Heart left ventricle (tissue), 16 donors: ENCODE measurements at regions of chr6 and their contacts with region 1.

Region 1: DNA sequence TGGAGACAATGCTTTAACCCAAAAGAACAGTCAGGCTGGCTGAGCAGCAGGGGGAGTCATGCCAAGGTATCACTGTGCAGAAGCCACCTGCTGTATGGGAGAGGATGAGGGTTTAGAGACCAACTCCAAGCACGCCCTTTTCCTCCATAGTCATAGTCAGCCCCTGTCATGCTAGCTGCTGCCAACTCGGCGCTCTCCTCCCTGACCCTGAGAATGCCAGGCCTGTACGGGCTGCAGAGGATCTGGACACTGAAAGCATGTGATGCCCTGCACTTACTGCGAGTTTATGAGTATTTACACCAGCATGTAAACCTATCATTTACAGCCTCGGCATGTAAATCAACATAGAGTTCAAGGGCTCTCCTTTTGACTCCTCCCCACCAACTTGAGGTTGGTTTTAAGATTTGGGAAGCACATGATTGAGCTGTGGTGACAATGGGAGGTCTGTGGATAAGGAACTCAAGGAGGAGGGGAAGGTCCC is 11.7 kb upstream of the SCUBE3 start:
- DNase-seq: peak in 3 of 5 donors; percentile 20 to 63 (median 31)
- ATAC-seq: peak; percentile 71 to 83 (median 77)
- H3K4me3 ChIP-seq: no peak overlapping the region
- H3K27ac ChIP-seq: peak overlapping the region in 4 of 12 donors; percentile 10 to 46 (median 26)
- H3K4me1 ChIP-seq: peaks cover 0 to 24% (median 2%) of the 10 kb centered on the region in 12 donors
- H3K27me3 ChIP-seq: no peaks in the 10 kb centered on the region
- CTCF ChIP-seq: no peak
- POLR2A ChIP-seq: no peak

Region 2: DNA sequence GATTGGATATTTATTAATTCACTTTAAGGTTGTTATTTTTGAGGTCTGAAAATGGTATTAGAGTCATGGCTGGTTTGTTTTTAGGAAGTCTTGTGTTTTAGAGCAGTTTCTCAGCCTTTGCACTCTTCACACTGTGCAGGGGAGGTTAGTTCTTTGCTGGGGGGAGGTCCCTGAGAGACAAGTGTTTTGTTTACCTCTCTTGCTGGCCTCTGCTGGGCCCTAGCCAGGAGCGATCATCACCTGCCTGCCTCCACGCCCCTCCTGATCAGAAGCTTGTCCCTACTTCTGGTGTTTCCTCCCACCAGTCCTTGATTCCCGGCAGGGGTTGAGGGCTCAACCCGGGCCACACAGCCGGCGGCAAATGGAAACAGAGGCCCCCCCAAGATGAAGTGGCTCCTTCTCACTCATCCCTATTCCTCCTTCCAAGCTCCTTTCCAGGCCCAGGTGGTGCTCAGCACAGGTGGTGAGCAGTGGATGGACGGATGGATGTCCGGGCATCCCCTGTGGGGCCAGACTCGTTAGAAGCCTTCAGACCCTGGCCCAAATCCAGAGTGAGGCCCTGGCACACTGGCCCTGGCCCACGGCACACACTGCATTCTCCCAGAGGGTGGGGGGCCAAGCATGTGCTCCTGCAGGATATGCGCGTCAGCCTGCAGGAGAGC is 1107.5 kb before region 1 on chr6:
- intact Hi-C with region 1: no loop called
- DNase-seq: no peak
- ATAC-seq: no peak
- H3K4me3 ChIP-seq: no peak overlapping the region
- H3K27ac ChIP-seq: no peak overlapping the region
- H3K4me1 ChIP-seq: no peaks in the 10 kb centered on the region
- H3K27me3 ChIP-seq: peaks cover 7 to 46% (median 20%) of the 10 kb centered on the region in 9 donors
- CTCF ChIP-seq: no peak
- POLR2A ChIP-seq: no peak

Region 3: GRCh38 chr6:34986845-34987246 is 215.3 kb before region 1 on chr6:
- intact Hi-C with region 1: loop called in 7 of 10 experiments (anchors 2 to 10 kb)
- DNase-seq: peak in 4 of 5 donors; percentile 58 to 78 (median 68)
- ATAC-seq: peak; percentile 56 to 86 (median 83)
- H3K4me3 ChIP-seq: no peak overlapping the region
- H3K27ac ChIP-seq: peak overlapping the region in 2 of 12 donors; percentile 15 to 61
- H3K4me1 ChIP-seq: peaks cover 0 to 12% (median 7%) of the 10 kb centered on the region in 12 donors
- H3K27me3 ChIP-seq: no peaks in the 10 kb centered on the region
- CTCF ChIP-seq: peak; percentile 77 to 96 (median 88)
- POLR2A ChIP-seq: no peak

Region 4: DNA sequence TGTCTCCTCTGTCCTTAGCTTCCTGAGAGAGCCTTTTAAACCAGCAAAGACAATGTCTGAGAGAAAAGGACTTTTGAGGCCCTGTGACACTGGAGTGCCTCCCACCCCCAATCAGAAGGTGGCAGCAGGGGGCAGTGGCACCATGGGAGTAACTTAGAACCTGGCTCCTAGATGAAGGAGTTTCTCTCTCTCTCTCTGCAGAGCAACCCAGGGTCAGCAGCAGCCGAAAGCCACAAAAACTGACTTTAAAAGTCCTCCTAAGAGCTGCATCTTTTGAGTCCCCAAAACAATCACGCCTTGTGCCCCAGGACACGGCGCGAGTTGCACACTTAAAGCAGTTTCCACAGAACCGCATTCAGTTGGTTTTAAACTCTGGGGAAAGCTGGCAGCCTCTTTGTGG is 55.7 kb before region 1 on chr6:
- intact Hi-C with region 1: loop called (anchors 1 to 10 kb)
- DNase-seq: peak in 4 of 5 donors; percentile 25 to 51 (median 45)
- ATAC-seq: peak; percentile 83 to 92 (median 91)
- H3K4me3 ChIP-seq: no peak overlapping the region
- H3K27ac ChIP-seq: no peak overlapping the region
- H3K4me1 ChIP-seq: peaks cover 0 to 11% (median 0%) of the 10 kb centered on the region in 12 donors
- H3K27me3 ChIP-seq: peaks cover 0 to 2% (median 0%) of the 10 kb centered on the region in 9 donors
- CTCF ChIP-seq: peak; percentile 30 to 70 (median 60)
- POLR2A ChIP-seq: no peak

Region 5: GRCh38 chr6:35165630-35166071 is 36.5 kb before region 1 on chr6:
- intact Hi-C with region 1: loop called in 1 of 10 experiments (anchors 5 kb)
- DNase-seq: no peak
- ATAC-seq: no peak
- H3K4me3 ChIP-seq: no peak overlapping the region
- H3K27ac ChIP-seq: no peak overlapping the region
- H3K4me1 ChIP-seq: peaks cover 0 to 29% (median 11%) of the 10 kb centered on the region in 12 donors
- H3K27me3 ChIP-seq: no peaks in the 10 kb centered on the region
- CTCF ChIP-seq: no peak
- POLR2A ChIP-seq: no peak

Region 6: DNA sequence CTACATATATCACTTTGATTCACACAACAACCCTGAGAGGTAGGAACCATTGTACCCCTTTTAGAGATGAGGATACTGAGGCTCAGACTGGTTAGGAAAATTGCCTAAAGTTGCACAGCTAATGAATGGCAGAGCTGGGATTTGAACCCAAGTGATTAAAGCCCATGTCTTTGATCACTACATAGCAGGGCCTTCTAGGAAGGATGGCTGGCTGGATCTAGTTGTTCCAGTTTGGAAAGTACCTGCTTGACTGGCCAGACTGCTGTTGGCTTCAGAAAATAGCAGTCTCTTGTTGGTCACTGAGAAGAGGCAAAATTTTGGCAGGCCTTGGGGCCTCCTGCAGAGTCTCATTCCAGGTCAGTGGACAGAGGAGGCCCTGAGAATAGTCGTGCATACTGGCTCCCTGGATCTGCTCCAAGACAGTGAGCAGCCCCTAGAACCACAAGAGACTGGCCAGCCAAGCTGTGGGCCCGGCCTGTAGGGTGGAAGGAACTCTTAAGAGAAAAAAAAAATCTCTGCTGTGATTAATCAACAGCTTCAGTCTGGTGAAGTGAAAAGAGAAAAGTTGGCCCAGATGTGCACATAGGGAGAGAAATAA is 157.7 kb after region 1 on chr6:
- intact Hi-C with region 1: no loop called
- DNase-seq: peak; percentile 32 to 68 (median 61)
- ATAC-seq: peak; percentile 36 to 65 (median 51)
- H3K4me3 ChIP-seq: no peak overlapping the region
- H3K27ac ChIP-seq: peak overlapping the region in 11 of 12 donors; percentile 15 to 73 (median 57)
- H3K4me1 ChIP-seq: peaks cover 0 to 69% (median 50%) of the 10 kb centered on the region in 12 donors
- H3K27me3 ChIP-seq: no peaks in the 10 kb centered on the region
- CTCF ChIP-seq: no peak
- POLR2A ChIP-seq: no peak